ENCODE measurements at regions of chr20 and their contacts with region 1.

Region 1: GRCh38 chr20:46406199-46406985 is at the start of gene ELMO2:
- DNase-seq: peak; percentile 99 to 100
- H3K4me3 ChIP-seq: peak within 1 kb of the TSS; percentile 55
- H3K4me3 Mint-ChIP-seq: peak within 1 kb of the TSS; percentile 82
- H3K27ac Mint-ChIP-seq: peak within 1 kb of the TSS; percentile 79
- H3K4me1 ChIP-seq: peaks cover 23% of the 10 kb centered on the region
- H3K4me1 Mint-ChIP-seq: peaks cover 8% of the 10 kb centered on the region
- H3K27me3 ChIP-seq: no peaks in the 10 kb centered on the region
- H3K27me3 Mint-ChIP-seq: peaks cover 4% of the 10 kb centered on the region
- CTCF ChIP-seq: peak; percentile 12 to 48
- total RNA-seq, gene ELMO2: 75.0 and 82.4 TPM in 2 replicates

Region 2: DNA sequence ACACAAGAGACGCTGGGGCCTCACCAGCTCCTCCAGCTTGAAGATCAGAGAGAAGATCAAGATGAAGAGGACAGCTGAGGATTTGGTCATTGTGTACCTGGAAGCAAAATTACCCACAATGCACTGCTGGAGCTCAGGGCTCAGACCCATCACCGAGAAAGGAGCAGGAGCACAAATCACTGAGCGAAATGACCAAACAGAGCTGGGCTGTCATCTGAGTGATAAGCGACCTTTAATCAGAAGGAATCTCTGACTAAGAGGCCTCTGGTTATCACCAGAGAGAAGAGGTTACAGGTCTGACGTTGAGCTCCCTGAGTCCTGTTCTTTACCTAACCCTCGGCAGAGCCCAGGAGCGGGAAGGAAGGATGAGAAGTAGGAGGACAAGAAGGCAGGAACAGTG is 50.6 kb before region 1 on chr20:
- CTCF ChIA-PET with region 1: no interaction called
- POLR2A ChIA-PET with region 1: no interaction called
- intact Hi-C with region 1: loop called (anchors 2 kb)
- DNase-seq: peak; percentile 67 to 85
- H3K4me3 ChIP-seq: no peak overlapping the region
- H3K4me3 Mint-ChIP-seq: peak overlapping the region; percentile 54
- H3K27ac Mint-ChIP-seq: peak overlapping the region; percentile 86
- H3K4me1 ChIP-seq: peaks cover 42% of the 10 kb centered on the region
- H3K4me1 Mint-ChIP-seq: peaks cover 35% of the 10 kb centered on the region
- H3K27me3 ChIP-seq: no peaks in the 10 kb centered on the region
- H3K27me3 Mint-ChIP-seq: no peaks in the 10 kb centered on the region
- CTCF ChIP-seq: no peak

Region 3: DNA sequence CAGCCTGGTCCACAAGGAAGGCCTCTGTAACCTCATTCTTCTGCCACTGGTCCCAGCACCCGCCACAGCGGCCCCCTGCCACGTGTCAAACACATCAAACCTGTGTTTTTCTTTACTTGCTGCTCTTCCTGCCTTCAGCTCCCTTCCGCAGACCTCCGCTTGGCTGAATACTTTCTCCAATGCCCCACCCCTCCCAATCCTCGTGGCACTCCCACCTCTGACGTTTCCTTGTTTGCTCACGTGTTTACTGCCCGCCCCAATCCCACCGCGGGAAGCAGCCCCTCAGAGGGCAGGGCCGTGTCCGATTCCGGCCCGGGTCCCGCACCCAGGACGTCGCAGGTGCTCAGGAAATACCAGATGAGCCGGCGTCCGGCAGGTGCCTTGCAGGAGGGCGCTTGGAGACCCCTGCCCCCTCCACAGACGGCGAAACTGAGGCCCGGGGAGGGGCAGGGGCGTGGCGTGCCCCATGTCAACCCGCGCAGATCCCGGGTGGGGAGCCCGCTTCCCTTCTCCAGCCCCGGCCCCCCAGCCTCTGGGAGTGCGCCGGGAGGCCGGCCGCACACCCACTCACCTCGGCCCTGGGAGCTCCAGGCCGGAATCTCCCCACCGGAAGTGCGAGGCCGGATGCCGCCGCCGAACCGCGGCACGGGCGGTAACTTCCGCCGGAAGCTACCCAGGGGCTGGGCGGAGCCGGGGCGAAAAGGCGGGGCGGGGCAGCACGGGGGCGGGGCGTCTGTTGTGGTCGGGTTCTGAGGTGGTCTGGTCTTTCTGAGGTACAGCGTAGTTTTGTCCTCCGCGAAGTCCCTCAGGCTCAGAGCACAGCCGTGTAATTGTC is 42.4 kb before region 1 on chr20:
- CTCF ChIA-PET with region 1: interaction called, 13 read pairs
- POLR2A ChIA-PET with region 1: interaction called, 51 read pairs
- intact Hi-C with region 1: loop called (anchors 1 kb)
- DNase-seq: peak; percentile 97 to 98
- H3K4me3 ChIP-seq: peak overlapping the region; percentile 86
- H3K4me3 Mint-ChIP-seq: peak overlapping the region; percentile 88
- H3K27ac Mint-ChIP-seq: peak overlapping the region; percentile 83
- H3K4me1 ChIP-seq: peaks cover 11% of the 10 kb centered on the region
- H3K4me1 Mint-ChIP-seq: peaks cover 14% of the 10 kb centered on the region
- H3K27me3 ChIP-seq: no peaks in the 10 kb centered on the region
- H3K27me3 Mint-ChIP-seq: no peaks in the 10 kb centered on the region
- CTCF ChIP-seq: no peak

Region 4: DNA sequence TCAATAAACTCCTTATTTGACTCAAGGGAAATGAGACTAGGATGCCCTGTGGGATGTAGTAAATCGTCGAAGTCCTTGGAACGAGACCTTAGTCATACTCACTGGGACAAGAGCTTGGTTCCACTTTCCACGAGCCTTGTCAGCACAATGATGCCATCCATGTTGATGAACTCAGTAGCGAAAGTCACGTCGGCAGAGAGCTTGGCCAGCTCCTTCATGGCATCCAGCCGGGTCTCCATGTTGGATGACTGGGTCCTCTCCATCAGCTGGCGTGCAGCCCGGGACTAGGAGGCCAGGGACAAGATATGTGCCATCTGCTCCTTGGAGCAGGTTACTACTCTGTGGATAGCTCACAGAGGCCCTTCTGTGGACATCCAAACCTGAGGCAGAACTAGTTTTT is 17.5 kb before region 1 on chr20:
- CTCF ChIA-PET with region 1: interaction called, 3 read pairs
- POLR2A ChIA-PET with region 1: interaction called, 13 read pairs
- intact Hi-C with region 1: loop called (anchors 2 kb)
- DNase-seq: no peak
- H3K4me3 ChIP-seq: no peak overlapping the region
- H3K4me3 Mint-ChIP-seq: no peak overlapping the region
- H3K27ac Mint-ChIP-seq: no peak overlapping the region
- H3K4me1 ChIP-seq: no peaks in the 10 kb centered on the region
- H3K4me1 Mint-ChIP-seq: no peaks in the 10 kb centered on the region
- H3K27me3 ChIP-seq: no peaks in the 10 kb centered on the region
- H3K27me3 Mint-ChIP-seq: no peaks in the 10 kb centered on the region
- CTCF ChIP-seq: no peak

Region 5: DNA sequence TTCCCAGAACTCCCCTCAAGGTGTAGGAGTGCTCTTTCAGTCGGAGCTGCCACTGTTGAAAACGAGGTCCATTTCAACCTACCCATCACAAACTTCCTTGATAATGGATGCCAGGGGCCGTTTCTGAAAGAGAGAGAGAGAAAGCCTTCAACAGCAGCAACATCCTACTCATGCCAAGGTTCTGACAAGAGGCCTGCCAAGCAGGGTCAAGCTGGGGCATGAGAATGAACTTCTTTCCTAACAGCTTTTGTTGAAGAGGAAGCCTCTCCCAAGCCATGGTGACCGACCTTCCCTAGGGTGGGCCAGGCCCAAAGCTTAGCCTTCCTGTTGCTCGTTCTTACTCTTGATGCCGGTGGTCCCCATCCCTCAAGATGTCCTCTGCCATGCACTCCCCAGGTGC is 12.4 kb before region 1 on chr20:
- CTCF ChIA-PET with region 1: interaction called, 3 read pairs
- POLR2A ChIA-PET with region 1: no interaction called
- intact Hi-C with region 1: loop called (anchors 2 kb)
- DNase-seq: no peak
- H3K4me3 ChIP-seq: no peak overlapping the region
- H3K4me3 Mint-ChIP-seq: no peak overlapping the region
- H3K27ac Mint-ChIP-seq: no peak overlapping the region
- H3K4me1 ChIP-seq: no peaks in the 10 kb centered on the region
- H3K4me1 Mint-ChIP-seq: no peaks in the 10 kb centered on the region
- H3K27me3 ChIP-seq: no peaks in the 10 kb centered on the region
- H3K27me3 Mint-ChIP-seq: no peaks in the 10 kb centered on the region
- CTCF ChIP-seq: no peak

Measured in Caco-2 (cell line).